ENCODE measurements at regions of chr16 and their contacts with region 1.

Region 1: DNA sequence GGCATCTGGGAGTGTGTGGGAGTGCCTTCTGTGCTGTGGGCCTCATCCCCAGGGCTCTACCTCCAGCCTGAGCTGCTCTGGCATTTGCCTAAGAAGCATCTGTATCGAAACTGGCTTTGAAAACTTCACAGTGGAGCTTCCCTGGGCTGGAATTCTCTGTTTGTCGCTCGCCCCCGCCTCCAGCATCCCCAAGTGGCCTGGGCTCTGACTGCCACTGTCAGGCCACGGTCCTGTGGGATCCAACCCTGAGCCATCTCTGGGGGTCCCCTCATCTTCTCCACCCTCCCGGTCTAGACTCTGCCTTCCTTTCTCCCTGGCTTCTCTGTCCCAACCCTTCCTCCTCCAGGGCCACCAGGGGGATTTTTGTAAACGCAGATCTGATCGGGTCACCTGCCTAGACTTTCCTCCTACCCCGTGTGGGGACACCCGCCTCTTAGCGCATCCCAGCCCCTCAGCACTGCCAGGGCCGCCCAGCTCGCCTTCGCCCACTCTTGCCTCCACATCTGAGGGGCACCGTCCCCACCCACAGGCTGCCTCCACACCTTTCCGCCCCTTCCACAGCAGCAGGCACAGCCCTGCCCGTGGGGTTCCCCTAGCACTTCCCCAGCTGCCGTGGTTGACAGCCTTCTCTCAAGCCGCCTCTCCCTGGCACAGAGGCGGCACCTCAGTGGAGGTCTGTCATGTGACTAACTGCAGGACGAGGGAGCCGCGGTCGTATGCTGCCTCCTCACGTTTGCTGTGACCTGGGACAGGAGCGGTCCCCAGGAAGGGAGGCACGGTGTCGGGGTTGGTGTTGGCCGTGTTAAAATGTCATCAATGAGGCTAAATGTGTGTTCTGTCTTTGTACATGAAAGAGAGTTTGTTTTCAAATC is 12.0 kb downstream of the TBC1D24 start:
- DNase-seq: peak; percentile 94
- H3K4me3 Mint-ChIP-seq: peak overlapping the region; percentile 10
- H3K27ac Mint-ChIP-seq: peak overlapping the region; percentile 69
- H3K4me1 Mint-ChIP-seq: peaks cover 16% of the 10 kb centered on the region
- H3K27me3 Mint-ChIP-seq: no peaks in the 10 kb centered on the region

Region 2: DNA sequence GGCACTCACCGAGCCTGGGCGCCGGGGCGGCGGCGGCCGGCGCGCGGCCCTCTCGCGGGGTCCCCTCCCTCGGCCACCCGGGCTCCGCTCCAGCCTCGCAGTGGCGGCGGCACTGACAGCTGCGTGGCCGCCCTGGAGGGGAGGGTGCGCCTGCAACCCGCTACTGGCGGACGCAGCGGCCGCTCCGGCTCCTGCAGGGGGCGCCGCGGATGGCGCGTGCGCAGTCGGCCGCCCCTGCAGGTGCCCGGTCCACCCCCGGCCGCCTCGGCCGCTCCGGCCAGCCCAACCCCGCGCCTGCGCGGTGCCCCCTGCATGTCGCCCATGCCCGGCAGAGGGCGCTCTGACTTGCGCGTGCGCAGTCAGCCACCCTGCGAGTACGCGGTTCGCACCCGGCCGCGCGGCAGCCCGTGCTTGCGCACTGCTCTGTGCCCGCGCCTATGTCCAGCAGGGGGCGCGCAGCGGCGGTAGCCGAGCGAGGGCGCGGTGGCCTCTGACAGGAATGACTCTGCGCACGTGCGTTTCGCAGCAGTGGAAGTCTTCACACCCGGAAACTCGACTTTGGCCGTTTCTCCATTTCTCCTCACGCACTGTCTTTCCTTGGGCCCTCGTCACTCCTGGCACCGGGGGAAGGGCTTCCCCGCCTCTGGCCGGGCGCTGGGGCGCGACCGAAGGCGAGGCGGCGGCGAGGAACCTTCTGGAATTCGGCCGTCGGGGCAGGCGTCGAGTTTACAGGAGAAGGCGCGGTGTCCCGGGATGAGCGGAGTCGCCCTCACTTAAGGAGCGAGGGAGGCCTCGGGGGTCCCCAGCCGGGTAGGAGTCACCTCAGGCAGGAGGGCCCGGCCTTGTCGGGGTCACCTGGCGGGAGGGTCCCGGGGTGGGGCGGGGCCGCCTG is 146.1 kb before region 1 on chr16 and contains the start of gene ABCA3:
- CTCF ChIA-PET with region 1: no interaction called
- intact Hi-C with region 1: loop called (anchors 1 kb)
- DNase-seq: peak; percentile 95
- H3K4me3 Mint-ChIP-seq: peak within 1 kb of the TSS; percentile 85
- H3K27ac Mint-ChIP-seq: no peak within 1 kb of the TSS
- H3K4me1 Mint-ChIP-seq: peaks cover 24% of the 10 kb centered on the region
- H3K27me3 Mint-ChIP-seq: peaks cover 8% of the 10 kb centered on the region
- total RNA-seq, gene ABCA3: 2.6 to 3.1 TPM

Region 3: DNA sequence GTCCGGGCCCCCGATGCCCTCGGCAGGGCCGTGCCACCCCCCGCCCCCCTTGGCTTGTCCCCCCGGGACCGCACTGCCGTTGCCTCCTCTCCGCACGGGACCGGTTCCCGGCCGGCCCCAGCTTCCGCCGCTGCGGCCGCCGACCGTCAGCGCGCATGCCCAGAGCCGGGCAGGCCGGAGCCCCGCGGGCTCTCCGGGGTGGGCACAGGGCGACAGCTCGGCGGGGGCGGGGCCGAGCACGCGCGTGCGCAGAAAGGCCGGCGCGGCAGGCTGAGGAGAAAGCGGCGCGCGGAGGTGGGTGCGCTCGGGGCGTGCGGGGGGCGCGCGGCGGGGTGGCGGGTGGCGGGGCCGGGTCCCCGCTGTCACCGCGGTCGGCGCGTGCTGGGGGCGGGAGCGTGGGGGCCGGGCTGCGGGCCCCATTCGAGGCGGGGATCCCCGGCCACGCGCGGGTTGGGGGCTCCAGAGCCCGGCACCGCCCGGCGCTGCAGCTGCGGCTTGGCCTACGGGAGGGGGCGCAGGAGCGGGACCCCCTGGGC is 11.9 kb before region 1 on chr16 and contains the start of gene TBC1D24:
- CTCF ChIA-PET with region 1: interaction called, 3 read pairs
- intact Hi-C with region 1: loop called (anchors 1 kb)
- DNase-seq: peak; percentile 77
- H3K4me3 Mint-ChIP-seq: peak within 1 kb of the TSS; percentile 77
- H3K27ac Mint-ChIP-seq: no peak within 1 kb of the TSS
- H3K4me1 Mint-ChIP-seq: peaks cover 18% of the 10 kb centered on the region
- H3K27me3 Mint-ChIP-seq: peaks cover 19% of the 10 kb centered on the region
- total RNA-seq, gene TBC1D24: 8.1 to 8.6 TPM